GM12878 (cell line): ENCODE measurements at regions of chr9 and their contacts with region 1.

Region 1: DNA sequence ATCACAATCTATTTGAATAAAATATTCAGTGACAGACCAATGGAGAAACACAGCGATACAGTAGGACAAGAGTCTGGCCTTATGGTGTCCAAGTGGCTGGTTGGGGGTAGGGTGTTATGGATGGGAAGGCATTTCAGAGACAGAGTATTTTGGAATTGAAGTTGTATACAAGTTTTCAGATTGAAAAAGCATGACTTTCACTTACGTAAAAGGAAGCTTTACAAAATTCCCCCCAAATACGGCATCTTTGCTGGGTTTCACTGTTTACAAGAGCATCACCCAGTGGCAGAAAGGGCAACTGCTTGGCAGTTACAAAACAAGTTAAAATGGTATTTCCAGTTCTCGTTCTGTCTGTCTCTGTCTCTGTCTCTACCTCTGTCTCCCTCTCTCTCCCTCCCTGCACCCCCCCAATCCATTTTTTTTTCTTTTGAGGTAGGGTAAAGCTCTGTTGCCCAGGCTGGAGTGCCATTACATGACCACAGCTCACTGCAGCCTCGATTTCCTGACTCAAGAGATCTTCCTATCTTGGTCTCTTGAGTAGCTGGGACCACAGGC is 86.2 kb downstream of the PTPN3 start:
- DNase-seq: peak; percentile 75
- ATAC-seq: peak; percentile 55
- H3K4me3 ChIP-seq: no peak overlapping the region
- H3K27ac ChIP-seq: peak overlapping the region; percentile 77
- H3K4me1 ChIP-seq: peaks cover 52% of the 10 kb centered on the region
- H3K27me3 ChIP-seq: no peaks in the 10 kb centered on the region
- CTCF ChIP-seq: peak; percentile 94 to 97 (median 97); a peak in 5 of 6 replicates
- EP300 ChIP-seq: peak; percentile 92 to 96
- POLR2A ChIP-seq: no peak
- RAD21 ChIP-seq: peak; percentile 88

Region 2: DNA sequence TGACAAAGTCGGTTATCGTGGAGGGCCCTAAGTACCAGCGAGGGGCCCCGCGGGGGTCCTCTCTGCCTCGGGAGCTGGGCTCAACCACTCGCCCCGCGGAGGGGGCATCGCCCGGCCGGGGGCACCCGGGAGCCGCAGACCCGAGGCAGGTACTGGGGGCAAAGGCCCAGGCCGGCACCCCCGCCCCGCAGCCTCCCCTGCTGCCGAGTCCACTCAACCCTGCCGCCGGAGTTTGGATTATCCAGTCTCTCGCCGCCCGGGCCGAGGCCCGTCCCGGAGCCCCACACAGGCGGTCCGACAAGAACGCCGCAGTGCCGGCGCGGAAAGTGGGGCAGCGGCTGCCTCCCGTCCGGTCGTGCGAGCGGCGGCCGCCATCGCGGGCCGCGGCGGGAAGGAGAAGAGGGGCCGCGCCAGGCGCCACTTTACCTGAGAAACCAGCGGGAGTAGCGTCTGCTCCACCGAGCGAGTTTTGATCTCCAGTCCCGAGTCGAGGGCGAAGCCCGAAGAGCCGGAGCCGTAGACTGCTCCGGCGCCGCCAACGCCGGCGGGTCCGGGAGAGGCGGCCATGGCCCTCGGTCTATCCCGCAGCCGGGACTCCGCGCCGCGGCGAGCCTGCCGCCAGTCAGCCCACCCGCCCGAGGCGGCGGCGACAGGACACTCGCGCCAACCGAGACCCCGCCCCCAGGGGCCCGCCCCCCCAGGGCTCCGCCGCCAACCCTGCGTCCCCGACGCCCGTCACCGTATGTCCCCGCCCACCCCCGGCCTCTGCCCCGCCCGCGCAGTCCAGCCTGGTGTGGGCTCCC is 398.8 kb before region 1 on chr9 and contains the start of gene CTNNAL1:
- CTCF ChIA-PET with region 1: interaction called, 3 read pairs
- POLR2A ChIA-PET with region 1: no interaction called
- RAD21 ChIA-PET with region 1: interaction called, 3 read pairs
- SMC1A ChIA-PET with region 1: no interaction called
- in situ Hi-C with region 1: no loop called
- intact Hi-C with region 1: loop called (anchors 10 kb)
- DNase-seq: no peak
- ATAC-seq: peak; percentile 92
- H3K4me3 ChIP-seq: peak within 1 kb of the TSS; percentile 67
- H3K27ac ChIP-seq: peak within 1 kb of the TSS; percentile 54
- H3K4me1 ChIP-seq: peaks cover 25% of the 10 kb centered on the region
- H3K27me3 ChIP-seq: no peaks in the 10 kb centered on the region
- CTCF ChIP-seq: no peak
- EP300 ChIP-seq: no peak
- POLR2A ChIP-seq: peak; percentile 88
- RAD21 ChIP-seq: no peak
- polyA plus RNA-seq, gene CTNNAL1: 27.2 to 48.4 TPM

Region 3: GRCh38 chr9:109182940-109183798 is 228.7 kb before region 1 on chr9:
- CTCF ChIA-PET with region 1: interaction called, 12 read pairs
- POLR2A ChIA-PET with region 1: no interaction called
- RAD21 ChIA-PET with region 1: interaction called, 4 read pairs
- SMC1A ChIA-PET with region 1: no interaction called
- in situ Hi-C with region 1: no loop called
- intact Hi-C with region 1: no loop called
- DNase-seq: no peak
- ATAC-seq: peak; percentile 84
- H3K4me3 ChIP-seq: no peak overlapping the region
- H3K27ac ChIP-seq: no peak overlapping the region
- H3K4me1 ChIP-seq: peaks cover 9% of the 10 kb centered on the region
- H3K27me3 ChIP-seq: peaks cover 2 to 3% of the 10 kb centered on the region in 2 experiments; a peak in 1 of 4 replicates
- CTCF ChIP-seq: peak; percentile 46 to 64 (median 54)
- EP300 ChIP-seq: no peak
- POLR2A ChIP-seq: no peak
- RAD21 ChIP-seq: peak; percentile 50

Region 4: GRCh38 chr9:109224751-109225150 is 187.1 kb before region 1 on chr9:
- CTCF ChIA-PET with region 1: no interaction called
- POLR2A ChIA-PET with region 1: no interaction called
- RAD21 ChIA-PET with region 1: no interaction called
- SMC1A ChIA-PET with region 1: no interaction called
- in situ Hi-C with region 1: no loop called
- intact Hi-C with region 1: no loop called
- DNase-seq: no peak
- ATAC-seq: no peak
- H3K4me3 ChIP-seq: no peak overlapping the region
- H3K27ac ChIP-seq: no peak overlapping the region
- H3K4me1 ChIP-seq: no peaks in the 10 kb centered on the region
- H3K27me3 ChIP-seq: peaks cover 0 to 3% of the 10 kb centered on the region in 2 experiments; a peak in 2 of 4 replicates
- CTCF ChIP-seq: no peak
- EP300 ChIP-seq: no peak
- POLR2A ChIP-seq: no peak
- RAD21 ChIP-seq: no peak

Region 5: DNA sequence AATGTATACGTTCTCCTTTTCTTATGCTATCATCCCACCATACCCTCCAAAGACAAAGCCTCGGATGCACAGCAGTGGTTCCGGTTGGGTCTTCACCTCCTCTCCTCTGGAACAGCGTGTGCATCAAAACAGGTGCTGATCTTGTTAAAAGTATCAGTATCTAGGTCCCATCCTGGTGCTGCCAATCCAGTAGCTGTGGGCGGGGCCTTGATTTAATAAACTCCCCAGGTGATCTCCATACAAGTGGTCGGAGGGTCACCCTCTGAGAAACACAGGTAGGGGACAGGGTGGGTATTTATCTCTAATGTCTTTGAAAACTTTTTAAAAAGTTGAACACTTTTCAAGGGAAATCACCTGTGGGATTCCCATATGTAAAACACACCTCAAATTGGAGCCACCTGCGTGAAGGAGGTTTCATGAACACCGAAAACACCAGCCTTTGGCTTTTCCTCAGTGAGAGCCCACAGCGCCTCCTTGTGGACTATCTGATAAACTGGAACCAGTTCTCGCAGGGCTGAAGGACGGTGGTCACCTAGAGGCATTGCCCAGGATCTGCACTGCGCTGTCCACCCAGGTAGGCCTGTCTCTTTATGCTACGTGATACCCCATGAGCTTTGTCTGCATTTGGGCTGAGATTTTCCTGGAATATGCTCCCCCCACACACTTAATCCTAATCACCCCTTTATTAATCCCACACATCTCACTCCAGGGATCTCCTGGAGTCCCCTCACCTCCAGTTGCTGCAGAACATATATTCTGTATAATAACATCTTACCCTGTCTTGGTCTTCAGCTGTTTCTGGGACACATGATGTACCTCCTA is 10.5 kb before region 1 on chr9:
- CTCF ChIA-PET with region 1: interaction called, 74 read pairs
- POLR2A ChIA-PET with region 1: interaction called, 9 read pairs
- RAD21 ChIA-PET with region 1: interaction called, 33 read pairs
- SMC1A ChIA-PET with region 1: interaction called, 49 read pairs
- in situ Hi-C with region 1: no loop called
- intact Hi-C with region 1: no loop called
- DNase-seq: no peak
- ATAC-seq: peak; percentile 75
- H3K4me3 ChIP-seq: no peak overlapping the region
- H3K27ac ChIP-seq: 0 out of 2 replicates have a peak overlapping the region, but pooled peaks have one; percentile 10
- H3K4me1 ChIP-seq: peaks cover 30% of the 10 kb centered on the region
- H3K27me3 ChIP-seq: no peaks in the 10 kb centered on the region
- CTCF ChIP-seq: peak; percentile 83 to 91 (median 85)
- EP300 ChIP-seq: no peak
- POLR2A ChIP-seq: no peak
- RAD21 ChIP-seq: peak; percentile 92

Region 6: GRCh38 chr9:109428854-109429253 is 17.0 kb after region 1 on chr9:
- CTCF ChIA-PET with region 1: interaction called, 8 read pairs
- POLR2A ChIA-PET with region 1: interaction called, 11 read pairs
- RAD21 ChIA-PET with region 1: interaction called, 10 read pairs
- SMC1A ChIA-PET with region 1: interaction called, 65 read pairs
- in situ Hi-C with region 1: no loop called
- intact Hi-C with region 1: no loop called
- DNase-seq: no peak
- ATAC-seq: no peak
- H3K4me3 ChIP-seq: no peak overlapping the region
- H3K27ac ChIP-seq: no peak overlapping the region
- H3K4me1 ChIP-seq: 0 out of 2 replicates have a peak, but pooled peaks cover 3% of the 10 kb centered on the region
- H3K27me3 ChIP-seq: no peaks in the 10 kb centered on the region
- CTCF ChIP-seq: no peak
- EP300 ChIP-seq: no peak
- POLR2A ChIP-seq: no peak
- RAD21 ChIP-seq: no peak